Ascending aorta (tissue), 2 donors: ENCODE measurements at regions of chr7 and their contacts with region 1.

Region 1: GRCh38 chr7:47600199-47601118 is 18.5 kb upstream of the TNS3 start:
- DNase-seq: peak in 1 of 2 donors; percentile 75
- H3K4me3 ChIP-seq: no peak overlapping the region
- H3K27ac ChIP-seq: no peak overlapping the region
- H3K4me1 ChIP-seq: peaks cover 7 to 35% of the 10 kb centered on the region in 2 donors
- H3K27me3 ChIP-seq: no peaks in the 10 kb centered on the region
- CTCF ChIP-seq: no peak

Region 2: DNA sequence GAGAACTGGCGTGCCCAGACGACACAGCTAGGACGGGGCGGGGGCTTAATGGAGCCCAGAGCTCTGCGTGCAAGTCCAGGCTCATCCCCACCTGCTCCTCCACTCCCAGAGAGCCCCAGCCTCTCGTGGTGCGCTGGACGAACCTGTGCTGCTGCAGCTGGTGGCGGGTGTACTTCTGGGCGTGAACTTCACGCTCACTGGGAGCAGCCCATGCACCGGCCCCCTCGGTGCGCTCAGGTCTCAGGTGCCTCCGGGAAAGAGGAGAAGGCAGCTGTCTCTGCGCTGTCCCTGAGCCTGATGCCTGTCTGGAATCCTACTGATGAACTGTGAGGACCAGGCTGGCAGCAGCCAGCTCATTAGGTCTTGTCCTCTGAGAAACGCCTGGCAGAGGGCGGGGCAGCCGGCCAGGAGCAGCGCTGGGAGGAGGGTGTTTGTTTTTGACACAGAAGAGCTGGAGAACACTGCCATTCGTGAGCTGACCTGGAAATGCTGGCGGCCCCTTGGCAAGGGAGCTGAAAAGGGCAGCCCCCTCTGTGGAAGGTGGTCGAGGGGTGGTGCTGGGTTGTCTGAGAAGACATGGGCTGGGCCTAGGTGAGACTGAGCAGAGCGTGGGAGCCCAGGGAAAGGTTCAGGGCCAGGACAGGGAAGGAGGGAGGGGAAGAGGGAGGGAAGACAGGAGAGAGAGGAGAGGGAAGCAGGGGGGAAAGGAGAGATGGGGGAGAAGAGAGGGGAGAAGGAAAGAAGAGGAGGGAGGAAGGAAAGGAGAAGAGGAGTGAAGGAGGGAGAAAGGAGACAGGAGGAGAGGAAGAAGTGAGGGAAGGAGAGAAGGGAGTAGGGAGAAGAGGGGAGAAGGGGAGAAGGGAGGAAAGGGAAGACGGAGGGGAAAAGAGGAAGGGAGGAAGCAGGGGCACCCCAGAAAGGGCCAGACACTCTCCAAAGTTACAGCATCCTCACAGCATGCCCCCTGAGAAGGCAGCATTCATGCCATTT is 34.9 kb after region 1 on chr7:
- intact Hi-C with region 1: loop called (anchors 5 kb)
- DNase-seq: peak in 1 of 2 donors; percentile 77
- H3K4me3 ChIP-seq: peak overlapping the region in 1 of 2 donors; percentile 35
- H3K27ac ChIP-seq: peak overlapping the region; percentile 83 to 85
- H3K4me1 ChIP-seq: peaks cover 18 to 31% of the 10 kb centered on the region in 2 donors
- H3K27me3 ChIP-seq: no peaks in the 10 kb centered on the region
- CTCF ChIP-seq: no peak

Region 3: GRCh38 chr7:47669061-47669891 is 68.8 kb after region 1 on chr7:
- intact Hi-C with region 1: loop called (anchors 1 kb)
- DNase-seq: peak; percentile 74 to 92
- H3K4me3 ChIP-seq: peak overlapping the region; percentile 4 to 43
- H3K27ac ChIP-seq: peak overlapping the region; percentile 47 to 71
- H3K4me1 ChIP-seq: peaks cover 7 to 19% of the 10 kb centered on the region in 2 donors
- H3K27me3 ChIP-seq: no peaks in the 10 kb centered on the region
- CTCF ChIP-seq: peak in 1 of 3 experiments; percentile 13

Region 4: GRCh38 chr7:48052748-48053147 is 452.3 kb after region 1 on chr7:
- intact Hi-C with region 1: no loop called
- DNase-seq: no peak
- H3K4me3 ChIP-seq: no peak overlapping the region
- H3K27ac ChIP-seq: no peak overlapping the region
- H3K4me1 ChIP-seq: no peaks in the 10 kb centered on the region
- H3K27me3 ChIP-seq: no peaks in the 10 kb centered on the region
- CTCF ChIP-seq: no peak